Caco-2 (cell line): ENCODE measurements at regions of chr1 and their contacts with region 1.

Region 1: DNA sequence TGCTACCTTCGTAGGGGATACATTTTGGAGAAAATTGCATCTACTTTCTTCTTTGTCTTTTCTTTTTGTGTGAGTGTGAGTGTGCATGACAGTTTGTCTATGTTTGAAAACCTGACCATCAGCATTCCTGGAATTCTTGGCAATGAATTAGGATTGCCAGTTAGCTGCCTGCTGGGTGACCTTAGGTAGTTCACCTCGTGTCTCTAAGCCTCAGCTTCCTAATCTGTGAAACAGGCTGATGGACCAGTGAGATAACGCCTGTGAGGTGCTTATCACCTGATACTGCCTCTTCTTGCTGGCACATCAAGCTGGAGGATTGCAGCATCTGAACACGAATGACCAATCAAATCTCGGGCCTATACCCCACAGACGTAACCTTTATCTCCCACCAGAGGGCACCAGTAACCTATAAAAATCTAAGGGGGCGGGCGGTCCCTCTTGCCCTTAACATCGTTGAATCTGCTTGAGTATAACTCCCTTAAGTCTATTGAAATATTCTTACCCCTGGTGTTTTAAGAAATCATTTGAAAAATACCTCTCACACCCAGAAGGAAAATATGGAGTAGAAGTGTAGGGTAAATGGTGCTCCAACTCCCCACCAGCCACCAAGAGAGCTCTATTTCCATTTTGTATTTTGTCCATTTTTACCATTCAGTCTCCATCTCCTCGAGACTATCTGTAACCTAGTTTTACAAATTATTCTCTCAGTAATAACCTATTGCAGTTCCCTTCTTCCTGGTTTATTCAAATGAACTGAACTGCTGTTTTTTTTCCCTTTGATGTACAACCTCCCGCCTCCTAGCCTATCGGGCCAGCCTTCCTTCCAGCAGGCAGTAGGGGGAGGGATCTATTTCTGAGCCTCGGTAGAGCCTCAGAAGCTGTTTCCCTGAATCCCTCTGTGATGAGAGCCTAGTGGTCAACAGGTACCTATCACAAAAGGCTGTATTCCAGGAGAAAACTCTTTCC is 49.7 kb downstream of the MDM4 start:
- DNase-seq: peak; percentile 75 to 78
- H3K4me3 ChIP-seq: no peak overlapping the region
- H3K4me3 Mint-ChIP-seq: peak overlapping the region; percentile 22
- H3K27ac Mint-ChIP-seq: peak overlapping the region; percentile 40
- H3K4me1 ChIP-seq: peaks cover 24% of the 10 kb centered on the region
- H3K4me1 Mint-ChIP-seq: peaks cover 46% of the 10 kb centered on the region
- H3K27me3 ChIP-seq: no peaks in the 10 kb centered on the region
- H3K27me3 Mint-ChIP-seq: no peaks in the 10 kb centered on the region
- CTCF ChIP-seq: peak; percentile 53 to 78

Region 2: GRCh38 chr1:204623894-204624361 is 58.0 kb after region 1 on chr1:
- CTCF ChIA-PET with region 1: interaction called, 10 read pairs
- POLR2A ChIA-PET with region 1: no interaction called
- intact Hi-C with region 1: loop called (anchors 2 kb)
- DNase-seq: peak; percentile 65
- H3K4me3 ChIP-seq: no peak overlapping the region
- H3K4me3 Mint-ChIP-seq: no peak overlapping the region
- H3K27ac Mint-ChIP-seq: no peak overlapping the region
- H3K4me1 ChIP-seq: peaks cover 29% of the 10 kb centered on the region
- H3K4me1 Mint-ChIP-seq: peaks cover 26% of the 10 kb centered on the region
- H3K27me3 ChIP-seq: no peaks in the 10 kb centered on the region
- H3K27me3 Mint-ChIP-seq: no peaks in the 10 kb centered on the region
- CTCF ChIP-seq: peak; percentile 48 to 55

Region 3: GRCh38 chr1:204763706-204764427 is 198.0 kb after region 1 on chr1:
- CTCF ChIA-PET with region 1: interaction called, 8 read pairs
- POLR2A ChIA-PET with region 1: no interaction called
- intact Hi-C with region 1: loop called (anchors 1 kb)
- DNase-seq: peak; percentile 56 to 66
- H3K4me3 ChIP-seq: no peak overlapping the region
- H3K4me3 Mint-ChIP-seq: no peak overlapping the region
- H3K27ac Mint-ChIP-seq: no peak overlapping the region
- H3K4me1 ChIP-seq: no peaks in the 10 kb centered on the region
- H3K4me1 Mint-ChIP-seq: no peaks in the 10 kb centered on the region
- H3K27me3 ChIP-seq: no peaks in the 10 kb centered on the region
- H3K27me3 Mint-ChIP-seq: peaks cover 24% of the 10 kb centered on the region
- CTCF ChIP-seq: peak; percentile 77 to 88